Body of pancreas (tissue), 4 donors: ENCODE measurements at regions of chr1 and their contacts with region 1.

Region 1: DNA sequence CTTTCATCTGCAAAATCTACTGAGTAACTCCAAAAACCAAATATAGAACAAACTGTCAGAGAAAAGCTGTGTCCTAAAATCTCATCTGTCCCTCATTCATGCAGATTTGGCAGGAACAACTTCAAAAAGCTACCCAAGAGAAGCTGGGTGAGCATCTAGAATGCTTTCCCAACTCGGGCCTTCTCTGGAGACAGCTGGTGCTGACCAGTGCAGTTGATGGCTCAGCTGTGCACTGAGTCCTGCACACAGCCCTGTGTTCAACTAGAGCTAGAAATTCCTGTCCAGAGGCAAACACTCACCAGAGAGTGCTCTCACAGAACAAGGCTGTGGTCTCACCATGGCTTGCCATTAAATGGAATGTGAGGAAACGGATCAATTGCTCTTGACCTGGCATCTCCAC is 202.8 kb downstream of the ASTN1 start:
- DNase-seq: no peak
- ATAC-seq: no peak
- H3K4me3 ChIP-seq: no peak overlapping the region
- H3K27ac ChIP-seq: no peak overlapping the region
- H3K4me1 ChIP-seq: no peaks in the 10 kb centered on the region
- H3K27me3 ChIP-seq: no peaks in the 10 kb centered on the region
- CTCF ChIP-seq: no peak
- POLR2A ChIP-seq: no peak

Region 2: DNA sequence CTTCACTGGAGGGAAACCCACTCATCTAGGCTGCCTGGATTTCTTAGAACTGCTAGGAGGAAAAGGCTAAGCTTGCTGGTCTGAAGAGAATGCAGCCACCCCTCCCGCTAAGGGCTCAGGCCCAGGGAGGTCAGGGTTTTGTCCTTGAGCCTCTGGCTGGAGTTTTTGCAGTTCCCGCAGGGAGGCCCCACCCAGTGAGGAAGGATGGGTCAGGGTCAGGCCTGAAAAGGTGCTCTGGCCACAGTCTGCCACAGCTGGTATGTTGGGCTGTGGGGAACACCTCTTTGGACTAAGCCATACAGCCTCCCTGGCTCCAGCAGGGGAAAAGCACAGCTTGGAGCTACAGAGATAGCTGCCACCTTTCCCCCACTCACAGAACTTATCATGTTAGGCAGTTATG is 570.1 kb before region 1 on chr1:
- intact Hi-C with region 1: loop called (anchors 10 kb)
- DNase-seq: no peak
- ATAC-seq: no peak
- H3K4me3 ChIP-seq: no peak overlapping the region
- H3K27ac ChIP-seq: no peak overlapping the region
- H3K4me1 ChIP-seq: no peaks in the 10 kb centered on the region
- H3K27me3 ChIP-seq: no peaks in the 10 kb centered on the region
- CTCF ChIP-seq: no peak
- POLR2A ChIP-seq: no peak